CD8-positive, alpha-beta T cell (primary cell): ENCODE measurements at regions of chr5 and their contacts with region 1.

Region 1: DNA sequence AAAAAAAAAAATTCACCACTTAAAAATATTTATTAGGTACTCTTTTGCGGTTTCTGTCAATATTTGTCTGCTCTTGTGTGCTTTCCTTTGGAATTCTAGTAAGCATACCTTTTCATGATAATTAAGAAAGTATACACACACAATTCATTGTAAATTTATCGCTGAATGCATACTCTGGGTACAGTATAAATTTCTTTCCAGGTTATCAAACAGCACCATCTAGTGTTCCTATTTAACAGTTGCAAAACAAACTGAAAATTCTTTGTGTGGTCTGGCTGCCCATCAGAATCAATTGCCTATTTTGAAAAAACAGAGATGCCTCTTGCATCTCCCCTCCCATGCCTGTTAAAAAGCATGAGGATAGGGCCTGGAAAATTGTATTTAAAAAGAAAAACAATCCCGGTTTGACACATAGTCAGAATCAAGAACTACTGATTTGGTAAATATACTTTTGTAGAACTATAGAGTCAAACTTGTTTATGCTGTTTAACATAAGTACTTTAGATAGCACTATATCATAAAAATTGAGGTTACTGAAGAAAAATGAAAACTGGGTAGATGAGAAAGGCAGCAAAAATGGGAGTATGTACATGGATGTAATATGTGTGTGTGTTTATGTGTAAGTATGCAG is 16.2 kb downstream of the PGGT1B start:
- DNase-seq: peak in 2 of 9 experiments; percentile 44 to 60
- ATAC-seq: peak; percentile 63
- H3K4me3 ChIP-seq: no peak overlapping the region
- H3K4me3 Mint-ChIP-seq: no peak overlapping the region
- H3K27ac ChIP-seq: no peak overlapping the region
- H3K27ac Mint-ChIP-seq: no peak overlapping the region
- H3K4me1 ChIP-seq: no peaks in the 10 kb centered on the region
- H3K4me1 Mint-ChIP-seq: peaks cover 18% of the 10 kb centered on the region
- H3K27me3 ChIP-seq: no peaks in the 10 kb centered on the region
- H3K27me3 Mint-ChIP-seq: no peaks in the 10 kb centered on the region
- CTCF ChIP-seq: peak; percentile 87

Region 2: GRCh38 chr5:113678924-113679575 is 1567.4 kb before region 1 on chr5:
- CTCF ChIA-PET with region 1: no interaction called
- POLR2A ChIA-PET with region 1: no interaction called
- intact Hi-C with region 1: loop called in 1 of 2 experiments (anchors 10 kb)
- DNase-seq: peak in 2 of 9 experiments; percentile 24 to 36
- ATAC-seq: no peak
- H3K4me3 ChIP-seq: no peak overlapping the region
- H3K4me3 Mint-ChIP-seq: no peak overlapping the region
- H3K27ac ChIP-seq: no peak overlapping the region
- H3K27ac Mint-ChIP-seq: no peak overlapping the region
- H3K4me1 ChIP-seq: no peaks in the 10 kb centered on the region
- H3K4me1 Mint-ChIP-seq: no peaks in the 10 kb centered on the region
- H3K27me3 ChIP-seq: no peaks in the 10 kb centered on the region
- H3K27me3 Mint-ChIP-seq: peaks cover 2% of the 10 kb centered on the region
- CTCF ChIP-seq: peak; percentile 24

Region 3: GRCh38 chr5:115180165-115180709 is 66.2 kb before region 1 on chr5:
- CTCF ChIA-PET with region 1: no interaction called
- POLR2A ChIA-PET with region 1: no interaction called
- intact Hi-C with region 1: loop called in 1 of 2 experiments (anchors 5 kb)
- DNase-seq: peak in 4 of 9 experiments; percentile 23 to 46 (median 34)
- ATAC-seq: peak; percentile 63
- H3K4me3 ChIP-seq: peak overlapping the region; percentile 40 to 47
- H3K4me3 Mint-ChIP-seq: peak overlapping the region; percentile 80
- H3K27ac ChIP-seq: no peak overlapping the region
- H3K27ac Mint-ChIP-seq: no peak overlapping the region
- H3K4me1 ChIP-seq: peaks cover 18% of the 10 kb centered on the region
- H3K4me1 Mint-ChIP-seq: peaks cover 9% of the 10 kb centered on the region
- H3K27me3 ChIP-seq: peaks cover 41 to 43% of the 10 kb centered on the region in 2 experiments
- H3K27me3 Mint-ChIP-seq: peaks cover 77% of the 10 kb centered on the region
- CTCF ChIP-seq: no peak

Region 4: GRCh38 chr5:115435778-115436712 is 189.6 kb after region 1 on chr5:
- CTCF ChIA-PET with region 1: no interaction called
- POLR2A ChIA-PET with region 1: no interaction called
- intact Hi-C with region 1: no loop called
- DNase-seq: no peak
- ATAC-seq: no peak
- H3K4me3 ChIP-seq: no peak overlapping the region
- H3K4me3 Mint-ChIP-seq: no peak overlapping the region
- H3K27ac ChIP-seq: no peak overlapping the region
- H3K27ac Mint-ChIP-seq: no peak overlapping the region
- H3K4me1 ChIP-seq: no peaks in the 10 kb centered on the region
- H3K4me1 Mint-ChIP-seq: no peaks in the 10 kb centered on the region
- H3K27me3 ChIP-seq: no peaks in the 10 kb centered on the region
- H3K27me3 Mint-ChIP-seq: no peaks in the 10 kb centered on the region
- CTCF ChIP-seq: no peak